ENCODE measurements at regions of chr3 and their contacts with region 1.

Region 1: GRCh38 chr3:37905987-37906674 is 44.5 kb downstream of the CTDSPL start:
- DNase-seq: no peak
- H3K4me3 ChIP-seq: no peak overlapping the region
- H3K27ac ChIP-seq: no peak overlapping the region
- H3K4me1 ChIP-seq: peaks cover 20% of the 10 kb centered on the region
- H3K27me3 ChIP-seq: no peaks in the 10 kb centered on the region
- CTCF ChIP-seq: no peak

Region 2: GRCh38 chr3:37819591-37819990 is 86.5 kb before region 1 on chr3:
- CTCF ChIA-PET with region 1: no interaction called
- dilution Hi-C with region 1: no loop called
- in situ Hi-C with region 1: no loop called
- intact Hi-C with region 1: no loop called
- DNase-seq: peak; percentile 8
- H3K4me3 ChIP-seq: no peak overlapping the region
- H3K27ac ChIP-seq: no peak overlapping the region
- H3K4me1 ChIP-seq: no peaks in the 10 kb centered on the region
- H3K27me3 ChIP-seq: no peaks in the 10 kb centered on the region
- CTCF ChIP-seq: no peak

Region 3: DNA sequence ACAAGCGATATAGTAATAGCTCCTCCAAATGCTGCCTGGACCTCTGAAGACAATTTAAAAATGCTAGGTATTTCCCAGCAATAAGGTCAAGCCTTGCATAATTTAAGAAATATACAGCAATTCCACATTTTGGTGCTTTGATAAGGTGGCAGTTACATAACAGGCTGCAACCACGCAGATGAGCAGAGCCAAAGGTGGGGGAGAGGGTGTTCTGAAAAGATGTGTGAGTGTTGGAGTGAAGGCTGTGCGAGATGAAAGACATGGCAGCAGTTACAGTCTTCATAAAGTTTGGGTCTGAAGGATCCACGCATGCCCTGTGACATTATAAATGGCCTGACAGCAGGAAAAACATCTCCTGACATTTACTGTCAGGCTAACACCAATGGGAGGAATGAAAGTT is 18.3 kb before region 1 on chr3:
- CTCF ChIA-PET with region 1: no interaction called
- dilution Hi-C with region 1: no loop called
- in situ Hi-C with region 1: no loop called
- intact Hi-C with region 1: loop called (anchors 2 kb)
- DNase-seq: no peak
- H3K4me3 ChIP-seq: no peak overlapping the region
- H3K27ac ChIP-seq: no peak overlapping the region
- H3K4me1 ChIP-seq: peaks cover 8% of the 10 kb centered on the region
- H3K27me3 ChIP-seq: no peaks in the 10 kb centered on the region
- CTCF ChIP-seq: no peak